Prostate gland (tissue), 2 donors: ENCODE measurements at regions of chr7 and their contacts with region 1.

Region 1: GRCh38 chr7:106056513-106057203 is 55.5 kb downstream of the SYPL1 start:
- DNase-seq: peak; percentile 76
- H3K4me3 ChIP-seq: no peak overlapping the region
- H3K27ac ChIP-seq: no peak overlapping the region
- H3K4me1 ChIP-seq: peaks cover 11% of the 10 kb centered on the region
- H3K27me3 ChIP-seq: no peaks in the 10 kb centered on the region
- CTCF ChIP-seq: peak; percentile 60 to 94 (median 86)
- POLR2A ChIP-seq: no peak

Region 2: DNA sequence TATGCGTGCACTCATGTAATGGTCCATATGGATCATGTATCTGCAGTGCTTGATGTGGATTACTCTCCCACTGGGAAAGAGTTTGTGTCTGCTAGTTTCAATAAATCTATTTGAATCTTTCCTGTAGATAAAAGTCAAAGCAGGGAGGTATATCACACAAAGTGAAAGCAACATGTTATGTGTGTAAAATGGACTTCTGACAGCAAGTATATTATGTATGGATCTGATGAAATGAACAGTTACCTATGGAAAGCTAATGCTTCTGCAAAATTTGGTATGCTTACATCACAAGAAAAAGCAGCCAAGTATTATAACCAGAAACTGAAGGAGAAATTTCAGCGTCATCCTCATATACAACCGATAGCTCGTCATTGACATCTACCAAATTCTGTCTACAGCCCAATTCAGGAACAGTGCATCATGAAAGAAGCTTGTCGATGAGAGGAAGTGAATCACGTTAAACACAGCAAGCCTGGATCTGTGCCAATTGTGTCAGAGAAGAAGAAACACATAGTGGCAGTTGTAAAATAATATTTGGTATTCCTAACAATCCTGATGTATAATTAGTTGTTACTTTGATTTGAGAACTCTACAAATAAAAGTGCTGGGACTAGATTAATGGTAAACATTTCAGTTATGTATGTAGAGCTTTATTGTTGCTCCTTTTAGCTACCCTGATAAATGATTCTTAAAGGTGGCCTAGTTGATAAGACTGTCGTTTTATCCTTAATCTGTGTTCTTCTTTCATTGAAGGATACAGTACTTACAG is 69.7 kb after region 1 on chr7:
- intact Hi-C with region 1: no loop called
- DNase-seq: no peak
- H3K4me3 ChIP-seq: no peak overlapping the region
- H3K27ac ChIP-seq: no peak overlapping the region
- H3K4me1 ChIP-seq: no peaks in the 10 kb centered on the region
- H3K27me3 ChIP-seq: no peaks in the 10 kb centered on the region
- CTCF ChIP-seq: no peak
- POLR2A ChIP-seq: no peak

Region 3: DNA sequence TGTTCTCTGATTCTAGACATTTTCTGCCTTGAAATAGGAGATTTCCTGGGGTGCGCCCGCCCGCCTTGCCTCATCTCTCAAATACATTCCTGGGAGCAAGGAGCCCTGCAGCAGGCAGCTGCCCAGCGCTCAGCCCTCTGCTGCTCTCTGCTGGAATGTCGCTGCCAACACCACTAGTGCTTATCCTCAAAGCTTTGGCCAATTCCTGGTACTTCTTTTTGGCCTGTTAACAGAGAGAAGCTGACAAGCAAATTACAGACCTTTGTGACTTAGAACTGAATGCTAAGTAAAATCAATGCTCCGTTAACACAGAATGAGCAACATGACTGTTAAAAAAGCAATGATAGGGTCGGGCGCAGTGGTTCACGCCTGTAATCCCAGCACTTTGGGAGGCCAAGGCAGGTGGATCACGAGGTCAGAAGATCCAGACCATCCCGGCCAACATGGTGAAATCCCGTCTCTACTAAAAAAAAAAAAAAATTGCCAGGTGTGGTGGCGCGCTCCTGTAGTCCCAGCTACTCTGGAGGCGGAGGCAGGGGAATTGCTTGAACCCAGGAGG is 97.3 kb after region 1 on chr7:
- intact Hi-C with region 1: loop called (anchors 2 kb)
- DNase-seq: peak; percentile 82
- H3K4me3 ChIP-seq: no peak overlapping the region
- H3K27ac ChIP-seq: no peak overlapping the region
- H3K4me1 ChIP-seq: no peaks in the 10 kb centered on the region
- H3K27me3 ChIP-seq: no peaks in the 10 kb centered on the region
- CTCF ChIP-seq: peak; percentile 83 to 98 (median 91)
- POLR2A ChIP-seq: no peak